HCT116 (cell line): ENCODE measurements at regions of chr20 and their contacts with region 1.

Region 1: DNA sequence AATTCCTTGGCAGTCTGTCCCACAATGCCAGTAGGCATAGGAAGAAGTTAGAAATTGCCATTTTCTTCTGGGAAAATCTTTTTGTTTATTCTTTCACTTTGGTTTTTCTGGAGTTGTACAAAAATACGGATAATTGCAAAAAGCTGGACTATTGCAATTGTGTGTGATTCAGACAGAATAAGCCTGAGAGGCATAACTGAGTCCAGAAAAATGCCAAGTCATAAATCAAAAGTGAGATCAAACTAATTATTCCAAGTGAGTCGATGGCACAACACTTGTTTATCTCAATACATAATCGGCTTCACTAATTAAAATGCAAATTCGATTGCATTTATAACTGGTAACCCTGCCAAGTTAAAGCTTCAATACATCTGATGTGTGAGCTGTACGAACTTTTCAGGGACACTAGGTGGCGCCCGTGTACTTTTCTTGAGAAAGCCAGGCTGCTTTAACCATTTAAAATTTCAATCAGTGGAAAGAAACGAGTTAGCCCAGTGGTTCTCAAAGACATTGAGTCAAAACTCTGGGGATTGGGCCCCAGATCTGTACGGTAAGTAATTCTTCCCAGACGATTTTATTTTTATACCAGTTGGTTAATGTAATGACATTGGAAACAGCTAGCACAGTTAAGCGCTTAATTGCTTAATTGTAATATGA is 102.6 kb downstream of the LAMP5 start:
- DNase-seq: peak; percentile 32
- ATAC-seq: peak; percentile 79
- H3K4me3 ChIP-seq: no peak overlapping the region
- H3K27ac ChIP-seq: no peak overlapping the region
- H3K4me1 ChIP-seq: no peaks in the 10 kb centered on the region
- H3K27me3 ChIP-seq: 0 out of 2 replicates have a peak, but pooled peaks cover 7% of the 10 kb centered on the region
- CTCF ChIP-seq: peak; percentile 62 to 91 (median 65); a peak in 5 of 6 replicates
- POLR2A ChIP-seq: no peak
- RAD21 ChIP-seq: peak; percentile 86

Region 2: DNA sequence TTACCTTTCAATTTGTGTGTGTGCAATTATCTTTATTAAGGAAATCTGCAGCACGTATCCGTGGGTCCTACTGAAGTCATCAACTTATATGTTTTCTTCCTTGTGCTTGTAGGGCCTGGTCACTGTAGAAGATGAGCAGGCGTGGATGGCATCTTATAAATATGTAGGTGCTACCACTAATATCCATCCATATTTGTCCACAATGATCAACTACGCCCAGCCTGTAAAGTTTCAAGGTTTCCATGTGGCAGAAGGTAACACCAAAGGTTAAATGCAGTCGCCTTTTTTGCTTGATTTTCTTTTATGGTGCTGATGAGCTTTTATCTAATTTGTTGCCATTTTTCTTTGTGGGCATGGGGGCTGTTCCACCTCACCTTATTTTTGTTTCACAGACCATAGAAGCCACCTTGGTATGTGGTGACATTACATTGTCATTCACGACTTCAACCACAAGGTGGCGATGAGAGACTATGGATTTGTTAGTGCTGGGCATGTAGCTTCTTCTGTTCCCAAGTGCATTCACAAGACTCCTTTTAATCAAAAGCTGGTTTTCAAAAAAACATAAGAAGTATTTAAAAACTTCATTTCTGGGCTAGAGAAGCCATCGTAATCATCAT is 209.0 kb before region 1 on chr20:
- CTCF ChIA-PET with region 1: interaction called, 252 read pairs
- POLR2A ChIA-PET with region 1: no interaction called
- RAD21 ChIA-PET with region 1: interaction called in 1 of 2 experiments, 4 read pairs
- intact Hi-C with region 1: no loop called
- DNase-seq: peak; percentile 54
- ATAC-seq: peak; percentile 92
- H3K4me3 ChIP-seq: no peak overlapping the region
- H3K27ac ChIP-seq: no peak overlapping the region
- H3K4me1 ChIP-seq: peaks cover 0 to 14% of the 10 kb centered on the region in 2 experiments; a peak in 3 of 4 replicates
- H3K27me3 ChIP-seq: no peaks in the 10 kb centered on the region
- CTCF ChIP-seq: peak; percentile 63 to 86 (median 74); a peak in 5 of 6 replicates
- POLR2A ChIP-seq: no peak
- RAD21 ChIP-seq: peak; percentile 80

Region 3: GRCh38 chr20:9903048-9903655 is 286.2 kb after region 1 on chr20:
- CTCF ChIA-PET with region 1: interaction called, 15 read pairs
- POLR2A ChIA-PET with region 1: no interaction called
- RAD21 ChIA-PET with region 1: no interaction called
- intact Hi-C with region 1: no loop called
- DNase-seq: peak; percentile 26
- ATAC-seq: peak; percentile 71
- H3K4me3 ChIP-seq: no peak overlapping the region
- H3K27ac ChIP-seq: no peak overlapping the region
- H3K4me1 ChIP-seq: no peaks in the 10 kb centered on the region
- H3K27me3 ChIP-seq: peaks cover 12% of the 10 kb centered on the region; the same call in 1 of the 2 replicates
- CTCF ChIP-seq: peak in 2 of 3 experiments; percentile 76 to 77; a peak in 4 of 6 replicates
- POLR2A ChIP-seq: no peak
- RAD21 ChIP-seq: no peak; the same call in 1 of the 2 replicates

Region 4: DNA sequence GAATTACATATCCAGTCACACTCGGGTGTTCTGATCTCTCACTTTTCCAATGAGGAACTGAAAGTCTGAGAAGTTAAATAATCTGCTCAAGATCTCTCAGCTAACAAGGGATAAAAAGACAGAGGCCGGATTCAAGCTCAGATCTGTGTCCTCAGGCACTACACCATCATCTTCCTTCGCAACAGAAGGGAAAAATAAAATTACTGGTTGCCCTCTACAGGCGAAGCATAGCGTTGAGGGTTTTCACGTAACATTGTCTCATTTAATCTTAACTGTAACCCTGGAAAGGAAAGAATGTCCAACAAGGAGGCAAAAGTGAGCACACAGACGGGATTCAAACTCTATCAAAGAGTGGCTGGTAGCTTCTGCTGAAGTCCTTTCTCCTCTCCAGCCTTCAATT is 350.0 kb after region 1 on chr20:
- CTCF ChIA-PET with region 1: interaction called, 17 read pairs
- POLR2A ChIA-PET with region 1: interaction called, 3 read pairs
- RAD21 ChIA-PET with region 1: no interaction called
- intact Hi-C with region 1: loop called (anchors 2 kb)
- DNase-seq: no peak
- ATAC-seq: peak; percentile 79
- H3K4me3 ChIP-seq: no peak overlapping the region
- H3K27ac ChIP-seq: no peak overlapping the region
- H3K4me1 ChIP-seq: no peaks in the 10 kb centered on the region
- H3K27me3 ChIP-seq: no peaks in the 10 kb centered on the region
- CTCF ChIP-seq: peak; percentile 31 to 58 (median 46); a peak in 4 of 6 replicates
- POLR2A ChIP-seq: no peak
- RAD21 ChIP-seq: peak; percentile 47

Region 5: DNA sequence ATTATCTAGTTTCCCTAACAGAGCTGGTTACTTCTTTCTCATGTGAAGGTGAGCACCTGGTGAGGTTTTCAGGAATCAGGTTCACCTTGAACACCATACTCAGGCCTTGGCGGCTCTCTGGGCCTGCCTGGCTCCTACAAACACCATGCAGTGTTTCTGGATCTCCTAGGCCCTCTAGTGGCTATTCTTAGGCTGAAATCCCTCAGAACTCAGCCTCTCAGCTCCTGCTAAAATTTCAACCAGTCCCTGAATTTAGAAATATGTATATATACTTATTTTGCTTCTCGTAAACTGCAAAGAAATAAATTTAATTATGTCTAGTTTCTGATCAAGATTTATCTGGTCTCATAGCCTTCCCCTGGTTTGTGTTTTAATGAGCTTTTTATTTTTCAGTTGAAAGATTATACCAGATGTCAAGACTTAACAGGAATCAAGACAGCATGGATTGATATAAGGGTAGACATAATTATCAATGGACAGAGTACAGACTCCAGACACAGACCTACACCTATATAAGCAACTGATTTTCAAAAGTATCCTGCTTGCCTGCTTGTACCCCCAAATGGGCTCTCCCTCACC is 473.7 kb after region 1 on chr20:
- CTCF ChIA-PET with region 1: interaction called, 55 read pairs
- POLR2A ChIA-PET with region 1: no interaction called
- RAD21 ChIA-PET with region 1: interaction called, 12 to 15 read pairs
- intact Hi-C with region 1: loop called (anchors 1 kb)
- DNase-seq: peak; percentile 38
- ATAC-seq: peak; percentile 91
- H3K4me3 ChIP-seq: no peak overlapping the region
- H3K27ac ChIP-seq: no peak overlapping the region
- H3K4me1 ChIP-seq: peaks cover 5 to 13% of the 10 kb centered on the region in 2 experiments; a peak in 3 of 4 replicates
- H3K27me3 ChIP-seq: no peaks in the 10 kb centered on the region
- CTCF ChIP-seq: peak; percentile 51 to 76 (median 73); a peak in 5 of 6 replicates
- POLR2A ChIP-seq: no peak
- RAD21 ChIP-seq: peak; percentile 80

Region 6: DNA sequence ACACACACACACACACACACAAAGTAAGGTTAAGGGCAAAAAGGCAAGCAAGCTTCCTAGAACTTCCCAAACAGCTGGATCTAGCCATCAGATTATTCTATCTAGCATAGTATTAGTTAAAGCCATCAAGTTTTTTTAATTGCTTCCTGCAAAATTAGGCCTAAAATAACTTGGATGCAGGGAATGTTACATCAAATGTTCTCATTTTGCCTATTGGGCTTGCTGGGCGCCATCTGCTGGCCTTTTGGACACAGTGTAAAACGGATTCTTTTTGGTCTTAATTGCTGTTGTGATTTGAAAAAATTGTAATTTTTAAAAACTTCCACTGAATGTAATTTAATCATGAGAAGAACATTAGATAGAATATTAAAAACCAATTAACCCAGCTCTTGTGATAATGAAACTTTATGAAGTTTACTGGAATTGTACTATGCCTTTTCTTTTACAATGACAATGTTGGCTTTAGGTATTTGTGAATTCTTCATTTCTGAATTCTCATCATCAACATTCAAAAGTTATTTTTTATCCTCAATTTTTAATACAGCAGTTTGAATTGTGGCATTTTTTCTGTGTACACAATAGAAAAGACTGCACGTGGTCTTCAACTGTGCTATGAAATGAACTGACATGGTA is 810.2 kb after region 1 on chr20:
- CTCF ChIA-PET with region 1: interaction called, 5 read pairs
- POLR2A ChIA-PET with region 1: no interaction called
- RAD21 ChIA-PET with region 1: no interaction called
- intact Hi-C with region 1: loop called (anchors 2 kb)
- DNase-seq: no peak
- ATAC-seq: peak; percentile 72
- H3K4me3 ChIP-seq: no peak overlapping the region
- H3K27ac ChIP-seq: no peak overlapping the region
- H3K4me1 ChIP-seq: peaks cover 0 to 16% of the 10 kb centered on the region in 2 experiments; a peak in 3 of 4 replicates
- H3K27me3 ChIP-seq: no peaks in the 10 kb centered on the region
- CTCF ChIP-seq: peak; percentile 43 to 88 (median 78); a peak in 5 of 6 replicates
- POLR2A ChIP-seq: no peak
- RAD21 ChIP-seq: peak; percentile 54

Region 7: GRCh38 chr20:11274141-11274594 is 1657.2 kb after region 1 on chr20:
- CTCF ChIA-PET with region 1: interaction called, 3 read pairs
- POLR2A ChIA-PET with region 1: interaction called, 3 read pairs
- RAD21 ChIA-PET with region 1: no interaction called
- intact Hi-C with region 1: loop called (anchors 5 kb)
- DNase-seq: peak; percentile 52
- ATAC-seq: peak; percentile 94
- H3K4me3 ChIP-seq: no peak overlapping the region
- H3K27ac ChIP-seq: no peak overlapping the region
- H3K4me1 ChIP-seq: peaks cover 11 to 19% of the 10 kb centered on the region in 2 experiments; a peak in 2 of 4 replicates
- H3K27me3 ChIP-seq: no peaks in the 10 kb centered on the region
- CTCF ChIP-seq: peak; percentile 51 to 78 (median 62); a peak in 5 of 6 replicates
- POLR2A ChIP-seq: no peak
- RAD21 ChIP-seq: peak; percentile 93